ENCODE measurements at regions of chr11 and their contacts with region 1.

Region 1: GRCh38 chr11:15473954-15474837 is 359.5 kb downstream of the INSC start:
- ATAC-seq: no peak
- H3K4me3 ChIP-seq: no peak overlapping the region
- H3K27ac ChIP-seq: no peak overlapping the region
- H3K4me1 ChIP-seq: peaks cover 6 to 31% of the 10 kb centered on the region in 2 donors

Region 2: DNA sequence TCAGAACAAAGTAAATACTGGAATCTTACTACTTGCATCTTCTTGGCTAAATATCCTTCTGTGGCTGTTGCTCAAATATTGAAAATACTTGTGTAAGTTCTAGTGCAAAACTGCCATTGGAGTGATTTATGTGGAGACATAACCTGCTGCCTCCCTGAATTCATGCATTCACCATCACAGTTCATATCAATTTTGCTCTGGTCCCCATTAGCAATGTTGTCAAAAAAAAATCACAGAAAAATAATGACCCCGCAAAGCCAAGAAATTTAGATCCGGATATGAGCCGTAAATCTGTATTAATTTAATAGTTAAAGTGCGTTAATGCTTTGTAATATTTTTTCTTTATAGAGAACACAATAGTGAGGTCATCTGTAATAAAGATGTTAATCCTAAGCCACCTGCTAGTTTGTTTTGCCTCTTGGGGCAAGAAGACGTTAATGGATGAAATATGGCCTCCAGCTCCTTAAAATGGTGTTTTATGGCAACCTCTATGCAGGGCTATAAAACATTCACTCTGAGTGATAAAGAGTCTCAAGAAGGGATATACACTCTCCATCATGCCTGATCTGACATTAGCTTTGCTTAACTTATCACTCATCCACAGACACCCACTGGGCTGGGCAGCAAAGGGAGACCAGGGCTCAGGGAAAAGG is 103.6 kb before region 1 on chr11:
- in situ Hi-C with region 1: loop called in 1 of 9 experiments (anchors 25 kb)
- ATAC-seq: peak in 5 of 8 experiments; percentile 93 to 95 (median 94)
- H3K4me3 ChIP-seq: no peak overlapping the region
- H3K27ac ChIP-seq: no peak overlapping the region
- H3K4me1 ChIP-seq: peaks cover 12 to 42% of the 10 kb centered on the region in 2 donors